A549 (cell line): ENCODE measurements at regions of chr17 and their contacts with region 1.

Region 1: GRCh38 chr17:17387830-17388441 is 84.8 kb downstream of the NT5M start:
- DNase-seq: peak; percentile 75 to 76
- ATAC-seq: peak; percentile 91 to 97
- H3K4me3 ChIP-seq: no peak overlapping the region
- H3K27ac ChIP-seq: no peak overlapping the region
- H3K4me1 ChIP-seq: no peaks in the 10 kb centered on the region
- CTCF ChIP-seq: peak; percentile 18; the same call in 1 of the 3 replicates
- EP300 ChIP-seq: no peak
- POLR2A ChIP-seq: no peak
- RAD21 ChIP-seq: 0 out of 5 replicates have a peak, but pooled peaks of 1 of the 2 experiments have one; percentile 11

Region 2: GRCh38 chr17:17376362-17376761 is 11.6 kb before region 1 on chr17:
- CTCF ChIA-PET with region 1: interaction called, 11 read pairs
- POLR2A ChIA-PET with region 1: no interaction called
- DNase-seq: no peak
- ATAC-seq: peak in 1 of 2 experiments; percentile 24; a peak in 1 of 6 replicates
- H3K4me3 ChIP-seq: no peak overlapping the region
- H3K27ac ChIP-seq: no peak overlapping the region
- H3K4me1 ChIP-seq: peaks cover 9% of the 10 kb centered on the region; the same call in 2 of the 3 replicates
- CTCF ChIP-seq: no peak
- EP300 ChIP-seq: no peak
- POLR2A ChIP-seq: no peak
- RAD21 ChIP-seq: no peak